Gastrocnemius medialis (tissue), 4 donors: ENCODE measurements at regions of chr14 and their contacts with region 1.

Region 1: DNA sequence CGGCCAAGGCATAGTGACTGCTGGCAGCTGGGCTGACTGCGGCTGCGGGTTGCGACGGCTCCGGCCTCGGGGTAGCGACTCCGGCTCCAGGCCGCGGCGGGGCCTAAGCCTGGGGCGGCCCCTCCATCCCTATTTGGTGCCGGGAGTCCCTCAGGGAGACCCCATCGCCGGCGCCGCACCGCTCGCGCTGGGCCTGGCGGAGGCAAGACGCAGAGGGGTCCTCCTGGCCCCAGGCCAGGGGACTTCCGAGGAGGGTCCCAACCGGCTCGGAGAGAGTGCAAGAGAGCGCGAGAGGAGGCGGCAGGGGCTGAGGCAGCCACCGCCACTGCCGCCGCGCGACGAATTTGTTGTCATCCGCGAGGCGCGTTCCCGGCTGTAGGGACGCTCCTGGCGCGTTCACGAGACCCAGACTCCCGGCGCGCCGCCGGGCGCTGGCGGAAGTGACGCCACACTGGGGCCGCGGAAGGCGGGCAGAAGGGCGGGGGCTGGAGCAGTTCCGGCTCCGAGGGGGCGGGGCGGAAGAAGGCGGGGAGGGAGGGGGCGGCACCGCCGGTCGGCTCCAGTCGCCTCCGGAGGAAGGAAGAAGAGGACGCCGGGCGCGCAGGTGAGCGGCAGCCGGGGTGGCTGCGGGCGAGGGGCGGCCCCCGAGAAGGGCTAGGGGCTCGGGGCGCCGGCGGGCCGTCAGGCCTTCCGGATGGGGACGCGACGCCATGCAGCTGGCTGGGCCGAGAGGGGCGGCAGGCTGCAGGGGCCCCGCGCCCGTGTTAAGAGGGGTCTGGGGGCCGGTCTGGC is at the starts of genes ATG2B and GSKIP:
- DNase-seq: peak; percentile 88 to 90
- ATAC-seq: peak; percentile 92 to 93
- H3K4me3 ChIP-seq: peak within 1 kb of the TSS; percentile 79 to 99 (median 88)
- H3K27ac ChIP-seq: peak within 1 kb of the TSS; percentile 93 to 96 (median 96)
- H3K4me1 ChIP-seq: peaks cover 30 to 32% of the 10 kb centered on the region in 2 donors
- H3K27me3 ChIP-seq: no peaks in the 10 kb centered on the region
- CTCF ChIP-seq: no peak
- POLR2A ChIP-seq: peak; percentile 71 to 75
- total RNA-seq, gene ATG2B: 22.2 to 30.3 (median 28.6) TPM
- total RNA-seq, gene GSKIP: 6.7 to 15.1 (median 8.6) TPM

Region 2: DNA sequence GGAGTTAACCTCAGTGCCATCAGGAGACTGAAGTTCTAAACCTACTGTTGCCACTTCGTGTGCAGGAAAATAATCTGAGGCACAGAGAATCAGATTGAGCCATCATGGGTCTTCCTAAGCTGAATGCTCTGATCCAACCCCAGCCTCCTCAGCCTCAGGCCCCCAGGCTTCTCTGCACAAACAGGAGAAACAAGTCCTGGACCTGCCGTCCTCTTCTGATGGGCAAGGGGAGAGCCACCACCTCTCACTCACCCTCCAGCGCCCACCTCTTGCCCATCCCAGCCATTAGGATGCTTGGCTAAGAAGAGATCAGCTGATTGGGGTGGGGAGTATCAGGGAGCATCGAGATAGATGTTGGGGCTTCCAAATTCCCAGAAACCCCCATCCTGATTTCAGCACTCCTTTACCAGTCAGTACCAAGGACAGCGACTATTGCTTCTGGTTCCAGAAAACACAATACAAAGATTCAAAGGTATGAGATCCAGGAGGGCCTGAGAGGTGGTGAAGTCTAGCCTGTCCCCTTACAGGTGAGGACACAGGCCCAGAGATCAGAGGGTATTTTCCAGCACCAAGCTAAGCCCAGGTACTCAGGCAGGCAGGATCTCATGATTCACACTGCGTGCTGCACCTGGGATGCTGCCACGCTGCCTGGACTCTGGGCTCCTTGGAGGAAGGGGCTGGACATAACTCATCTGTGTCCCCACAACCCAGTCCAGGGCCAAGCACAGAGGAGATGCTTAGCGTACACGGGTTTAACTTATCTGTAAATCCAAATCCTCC is 410.0 kb before region 1 on chr14:
- in situ Hi-C with region 1: no loop called
- intact Hi-C with region 1: no loop called
- DNase-seq: no peak
- ATAC-seq: no peak
- H3K4me3 ChIP-seq: no peak overlapping the region
- H3K27ac ChIP-seq: no peak overlapping the region
- H3K4me1 ChIP-seq: no peaks in the 10 kb centered on the region
- H3K27me3 ChIP-seq: peaks cover 0 to 2% (median 0%) of the 10 kb centered on the region in 3 donors
- CTCF ChIP-seq: no peak
- POLR2A ChIP-seq: no peak

Region 3: DNA sequence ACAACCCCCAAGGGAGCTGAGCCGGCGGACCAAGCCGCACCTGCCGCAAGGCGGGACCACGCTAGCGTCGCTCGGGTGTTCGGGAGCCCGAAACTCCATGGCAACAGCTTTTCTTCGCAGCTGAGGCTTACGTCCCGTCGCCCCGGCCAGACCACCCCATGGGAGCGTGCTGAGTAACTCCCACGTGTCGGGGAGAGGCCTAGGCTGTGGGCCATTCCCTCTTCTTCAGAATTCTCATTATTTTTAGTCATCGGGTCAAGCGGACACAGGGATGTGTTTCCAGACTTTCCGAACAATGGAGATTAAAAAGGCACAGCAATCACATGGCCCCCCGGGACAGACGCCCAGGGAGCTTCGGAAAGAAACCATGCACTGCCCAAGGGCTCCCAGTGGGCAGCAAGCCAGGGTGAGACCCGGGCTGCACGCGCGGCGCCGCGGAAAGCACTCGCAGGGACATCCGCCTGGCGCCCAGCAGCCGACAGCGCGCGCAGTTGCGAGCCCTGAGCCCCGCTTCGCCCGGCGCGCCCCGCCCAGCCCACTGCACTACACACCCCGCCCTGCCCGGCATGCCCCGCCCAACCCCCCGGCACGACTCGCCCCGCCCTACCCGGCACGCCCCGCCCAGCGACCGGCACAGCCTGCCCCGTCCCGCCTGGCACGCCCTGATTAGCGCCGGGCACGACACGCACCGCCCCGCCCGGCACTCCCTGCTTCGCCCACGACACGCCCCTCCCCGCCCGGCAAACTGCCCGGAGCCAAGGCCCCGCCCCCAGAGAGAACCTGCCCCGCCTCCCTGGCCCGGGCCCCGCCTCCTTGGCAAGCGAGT is 28.3 kb after region 1 on chr14:
- in situ Hi-C with region 1: no loop called
- intact Hi-C with region 1: loop called (anchors 1 kb)
- DNase-seq: peak; percentile 96
- ATAC-seq: peak; percentile 90 to 92
- H3K4me3 ChIP-seq: peak overlapping the region; percentile 73 to 98 (median 87)
- H3K27ac ChIP-seq: peak overlapping the region; percentile 62 to 70 (median 66)
- H3K4me1 ChIP-seq: peaks cover 0 to 11% of the 10 kb centered on the region in 2 donors
- H3K27me3 ChIP-seq: no peaks in the 10 kb centered on the region
- CTCF ChIP-seq: peak in 1 of 5 experiments; percentile 17
- POLR2A ChIP-seq: no peak

Region 4: DNA sequence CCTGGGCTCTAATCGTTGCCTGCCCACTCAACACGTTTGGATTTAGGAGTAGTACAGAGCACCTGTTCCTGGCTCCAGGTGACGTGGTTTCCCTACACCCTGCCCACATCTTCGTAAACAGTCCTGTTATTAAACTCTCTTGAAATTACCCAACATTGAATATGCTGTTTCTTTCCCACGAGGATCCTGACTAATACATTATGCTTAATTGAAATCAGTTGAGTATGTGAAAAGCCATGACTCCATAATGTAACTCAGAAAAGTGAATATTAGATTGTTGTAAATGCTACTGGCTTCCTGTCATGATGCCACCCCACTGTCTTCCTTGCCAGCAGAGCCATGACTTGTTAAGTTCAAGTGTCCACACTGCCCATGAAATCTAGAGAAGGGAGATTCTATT is 50.4 kb after region 1 on chr14:
- in situ Hi-C with region 1: no loop called
- intact Hi-C with region 1: no loop called
- DNase-seq: no peak
- ATAC-seq: no peak
- H3K4me3 ChIP-seq: no peak overlapping the region
- H3K27ac ChIP-seq: no peak overlapping the region
- H3K4me1 ChIP-seq: no peaks in the 10 kb centered on the region
- H3K27me3 ChIP-seq: no peaks in the 10 kb centered on the region
- CTCF ChIP-seq: no peak
- POLR2A ChIP-seq: no peak

Region 5: DNA sequence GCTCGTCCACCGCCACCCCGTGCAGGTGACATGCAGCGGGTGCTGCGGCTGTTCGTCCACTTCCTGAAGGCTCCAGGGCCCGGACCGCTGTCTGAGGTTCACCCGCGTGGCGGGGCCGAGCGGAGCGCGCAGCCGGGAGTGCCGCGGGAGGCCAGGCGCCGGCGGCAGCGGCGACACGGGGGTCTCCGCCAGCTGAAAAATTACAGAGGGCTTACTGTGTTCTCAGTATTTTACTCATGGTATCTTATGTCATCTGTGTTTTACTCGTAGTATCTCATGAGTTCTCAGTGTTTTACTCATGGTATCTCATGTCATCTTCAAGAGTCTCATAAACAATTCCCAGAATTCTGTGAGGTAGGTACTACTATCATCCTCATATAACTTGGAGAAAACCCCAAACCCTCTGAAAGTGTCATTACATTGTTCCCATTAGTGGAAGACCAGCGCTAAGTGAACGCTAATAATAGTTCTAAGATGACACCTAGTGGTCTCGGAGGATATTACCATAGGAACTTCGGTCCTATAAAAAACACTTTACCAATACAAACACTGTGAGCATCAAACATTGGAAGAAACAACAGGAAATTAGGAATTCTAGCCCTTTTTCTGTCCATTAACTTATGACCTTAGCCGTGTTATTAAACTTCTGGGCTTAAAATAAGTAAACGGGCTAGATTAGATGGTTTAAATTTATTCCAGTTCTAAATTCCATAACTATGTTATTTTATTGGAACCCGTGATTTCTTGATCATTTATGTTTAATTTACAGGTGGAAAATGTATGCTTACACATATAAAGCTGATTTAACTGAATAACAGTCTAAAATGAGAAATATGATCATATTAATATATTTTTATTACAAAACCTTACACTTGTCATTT is 61.2 kb after region 1 on chr14:
- in situ Hi-C with region 1: no loop called
- intact Hi-C with region 1: loop called (anchors 2 kb)
- DNase-seq: no peak
- ATAC-seq: peak; percentile 84 to 89
- H3K4me3 ChIP-seq: peak overlapping the region; percentile 27 to 51 (median 42)
- H3K27ac ChIP-seq: no peak overlapping the region
- H3K4me1 ChIP-seq: no peaks in the 10 kb centered on the region
- H3K27me3 ChIP-seq: no peaks in the 10 kb centered on the region
- CTCF ChIP-seq: peak; percentile 60 to 82 (median 73)
- POLR2A ChIP-seq: no peak

Region 6: GRCh38 chr14:96501742-96502617 is 138.8 kb after region 1 on chr14 and contains the start of gene PAPOLA:
- in situ Hi-C with region 1: no loop called
- intact Hi-C with region 1: loop called (anchors 1 kb)
- DNase-seq: peak; percentile 88 to 94
- ATAC-seq: peak; percentile 94
- H3K4me3 ChIP-seq: peak within 1 kb of the TSS; percentile 91 to 99 (median 98)
- H3K27ac ChIP-seq: peak within 1 kb of the TSS; percentile 97 to 99 (median 98)
- H3K4me1 ChIP-seq: peaks cover 39 to 44% of the 10 kb centered on the region in 2 donors
- H3K27me3 ChIP-seq: no peaks in the 10 kb centered on the region
- CTCF ChIP-seq: peak in 3 of 5 experiments; percentile 5 to 37 (median 23)
- POLR2A ChIP-seq: peak; percentile 75 to 87
- total RNA-seq, gene PAPOLA: 41.5 to 66.4 (median 50.7) TPM